ENCODE measurements at regions of chr18 and their contacts with region 1.

Region 1: DNA sequence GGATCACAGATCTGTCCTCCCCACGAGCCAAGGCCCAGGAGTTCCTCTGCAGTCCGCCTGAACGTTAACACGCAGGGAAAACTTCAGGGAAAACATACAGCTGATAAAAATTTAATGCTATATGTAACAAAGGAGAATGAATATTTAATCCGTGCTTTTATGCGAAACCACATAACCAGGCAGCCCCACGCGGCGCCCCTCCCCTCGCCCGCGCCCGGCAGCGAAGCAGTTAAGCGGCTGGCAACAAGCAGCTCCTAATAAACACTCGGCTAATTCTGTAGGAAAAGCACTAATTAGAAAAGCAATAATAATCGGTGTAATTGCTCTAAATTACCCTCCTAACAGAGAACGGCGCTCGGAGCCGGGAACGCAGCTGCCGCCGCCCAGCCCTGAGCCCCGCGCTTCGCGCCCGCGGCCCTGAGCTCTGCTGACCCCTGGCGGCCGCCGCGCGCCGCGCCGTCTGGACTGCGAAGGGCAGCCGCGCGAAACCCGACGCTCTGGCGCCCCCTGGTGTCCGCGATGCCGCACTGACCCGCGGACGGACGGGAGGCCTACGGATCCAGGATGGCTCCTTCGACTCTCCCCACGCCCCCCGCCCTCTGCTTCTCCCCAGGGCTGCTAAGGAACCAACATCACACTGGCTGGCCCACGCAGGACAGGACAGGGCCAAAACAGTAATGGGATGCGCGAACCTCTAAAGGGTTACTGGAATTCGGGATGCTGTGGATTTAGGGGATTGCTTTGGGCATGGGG is 181.4 kb downstream of the SMAD2 start:
- DNase-seq: peak; percentile 84
- H3K4me3 Mint-ChIP-seq: no peak overlapping the region
- H3K27ac Mint-ChIP-seq: no peak overlapping the region
- H3K4me1 Mint-ChIP-seq: no peaks in the 10 kb centered on the region
- H3K27me3 Mint-ChIP-seq: peaks cover 2% of the 10 kb centered on the region

Region 2: GRCh38 chr18:47050468-47050867 is 698.6 kb before region 1 on chr18:
- CTCF ChIA-PET with region 1: interaction called, 7 read pairs
- POLR2A ChIA-PET with region 1: no interaction called
- intact Hi-C with region 1: loop called (anchors 2 kb)
- DNase-seq: no peak
- H3K4me3 Mint-ChIP-seq: no peak overlapping the region
- H3K27ac Mint-ChIP-seq: no peak overlapping the region
- H3K4me1 Mint-ChIP-seq: no peaks in the 10 kb centered on the region
- H3K27me3 Mint-ChIP-seq: peaks cover 3% of the 10 kb centered on the region

Region 3: DNA sequence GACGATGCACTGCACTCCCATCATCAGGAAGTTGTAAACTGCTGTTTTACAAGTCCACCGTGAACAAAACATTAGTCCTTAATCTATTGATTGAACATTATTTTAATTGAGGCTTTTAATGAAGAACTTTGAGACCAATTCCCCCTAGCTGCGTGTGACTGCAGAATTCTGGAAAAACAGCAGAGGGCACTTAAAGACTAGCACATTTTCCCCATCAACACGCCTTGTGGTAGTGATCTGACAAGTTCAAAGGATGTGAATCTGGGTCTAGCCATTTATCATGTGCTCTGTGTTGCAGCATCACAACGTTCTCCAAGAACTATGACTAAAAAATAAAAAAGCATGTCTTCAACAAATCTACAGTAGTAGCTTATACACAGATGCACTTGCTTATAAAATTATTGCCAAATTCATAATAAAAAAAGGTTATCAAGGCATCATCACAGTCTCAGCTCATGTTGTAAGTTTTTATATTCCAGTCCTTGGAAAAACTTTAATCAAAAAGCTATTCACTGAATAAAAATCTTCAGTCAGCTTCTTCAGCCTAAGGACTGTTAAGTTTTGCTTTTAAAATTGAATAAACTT is 533.4 kb before region 1 on chr18:
- CTCF ChIA-PET with region 1: interaction called, 19 read pairs
- POLR2A ChIA-PET with region 1: no interaction called
- intact Hi-C with region 1: loop called (anchors 1 kb)
- DNase-seq: peak; percentile 26
- H3K4me3 Mint-ChIP-seq: no peak overlapping the region
- H3K27ac Mint-ChIP-seq: no peak overlapping the region
- H3K4me1 Mint-ChIP-seq: no peaks in the 10 kb centered on the region
- H3K27me3 Mint-ChIP-seq: peaks cover 27% of the 10 kb centered on the region

Region 4: GRCh38 chr18:47397671-47398319 is 351.2 kb before region 1 on chr18:
- CTCF ChIA-PET with region 1: no interaction called
- POLR2A ChIA-PET with region 1: no interaction called
- intact Hi-C with region 1: loop called (anchors 2 kb)
- DNase-seq: peak; percentile 21
- H3K4me3 Mint-ChIP-seq: no peak overlapping the region
- H3K27ac Mint-ChIP-seq: no peak overlapping the region
- H3K4me1 Mint-ChIP-seq: no peaks in the 10 kb centered on the region
- H3K27me3 Mint-ChIP-seq: no peaks in the 10 kb centered on the region

Region 5: DNA sequence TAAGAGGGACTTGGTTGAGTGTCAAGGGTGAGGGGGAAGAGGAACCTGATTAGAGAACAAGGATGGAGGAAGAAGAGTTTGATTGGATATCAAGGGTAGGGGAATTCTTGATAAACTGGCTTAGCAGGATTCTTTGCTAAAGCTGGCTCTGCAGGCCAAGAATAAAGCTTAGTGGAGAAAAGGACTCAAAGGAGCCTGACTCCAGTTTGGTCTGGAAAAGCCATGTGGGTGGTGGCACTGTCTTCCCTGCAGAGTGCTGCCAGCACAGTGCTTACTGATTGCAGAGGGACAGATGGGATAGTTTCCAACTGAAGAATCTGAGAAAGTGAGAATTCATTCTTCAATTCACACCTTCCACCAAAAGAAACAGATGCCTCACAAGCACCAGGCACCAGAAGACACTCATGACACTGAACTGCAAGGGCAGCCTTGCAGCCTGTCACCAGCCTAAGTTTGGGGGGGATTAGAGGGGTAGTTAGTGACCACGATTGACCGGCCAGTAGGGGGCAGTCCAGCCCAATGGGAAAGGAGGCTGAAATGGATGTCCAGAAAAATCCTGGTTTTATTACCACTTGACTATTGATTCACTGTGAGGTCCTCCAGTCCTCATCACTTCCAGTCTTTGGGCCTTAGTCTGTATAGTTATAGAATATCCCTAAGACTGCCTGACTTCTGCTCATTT is 153.1 kb before region 1 on chr18:
- CTCF ChIA-PET with region 1: interaction called, 12 read pairs
- POLR2A ChIA-PET with region 1: no interaction called
- intact Hi-C with region 1: loop called (anchors 1 kb)
- DNase-seq: peak; percentile 26
- H3K4me3 Mint-ChIP-seq: no peak overlapping the region
- H3K27ac Mint-ChIP-seq: no peak overlapping the region
- H3K4me1 Mint-ChIP-seq: no peaks in the 10 kb centered on the region
- H3K27me3 Mint-ChIP-seq: peaks cover 8% of the 10 kb centered on the region

Region 6: GRCh38 chr18:47737956-47738355 is 11.1 kb before region 1 on chr18:
- CTCF ChIA-PET with region 1: interaction called, 12 read pairs
- POLR2A ChIA-PET with region 1: no interaction called
- intact Hi-C with region 1: no loop called
- DNase-seq: no peak
- H3K4me3 Mint-ChIP-seq: no peak overlapping the region
- H3K27ac Mint-ChIP-seq: no peak overlapping the region
- H3K4me1 Mint-ChIP-seq: no peaks in the 10 kb centered on the region
- H3K27me3 Mint-ChIP-seq: peaks cover 24% of the 10 kb centered on the region

Region 7: DNA sequence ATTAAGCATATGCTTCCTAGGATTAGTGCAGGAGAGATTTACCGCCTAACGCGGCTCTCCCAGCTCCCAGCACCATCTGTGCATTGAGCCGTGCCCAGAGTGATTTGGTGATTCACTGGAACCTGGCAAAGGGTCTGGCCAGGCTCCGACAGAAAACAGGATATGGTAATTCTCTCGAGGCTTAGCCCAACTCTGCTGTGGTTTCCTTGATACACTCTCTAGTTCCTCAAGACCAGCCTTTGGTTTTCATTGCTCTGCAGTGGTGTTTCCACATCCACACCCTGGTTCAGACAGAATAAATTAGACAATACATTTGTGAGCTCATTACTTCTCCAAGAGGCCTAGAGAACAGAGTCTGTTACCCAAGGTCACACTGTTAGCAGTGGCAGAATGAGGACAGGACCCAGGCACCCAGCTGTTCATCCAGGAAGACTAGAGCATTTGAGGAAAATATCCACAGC is 204.5 kb after region 1 on chr18:
- CTCF ChIA-PET with region 1: no interaction called
- POLR2A ChIA-PET with region 1: no interaction called
- intact Hi-C with region 1: no loop called
- DNase-seq: peak; percentile 44
- H3K4me3 Mint-ChIP-seq: no peak overlapping the region
- H3K27ac Mint-ChIP-seq: no peak overlapping the region
- H3K4me1 Mint-ChIP-seq: peaks cover 9% of the 10 kb centered on the region
- H3K27me3 Mint-ChIP-seq: peaks cover 6% of the 10 kb centered on the region